ENCODE measurements at regions of chr6 and their contacts with region 1.

Region 1: DNA sequence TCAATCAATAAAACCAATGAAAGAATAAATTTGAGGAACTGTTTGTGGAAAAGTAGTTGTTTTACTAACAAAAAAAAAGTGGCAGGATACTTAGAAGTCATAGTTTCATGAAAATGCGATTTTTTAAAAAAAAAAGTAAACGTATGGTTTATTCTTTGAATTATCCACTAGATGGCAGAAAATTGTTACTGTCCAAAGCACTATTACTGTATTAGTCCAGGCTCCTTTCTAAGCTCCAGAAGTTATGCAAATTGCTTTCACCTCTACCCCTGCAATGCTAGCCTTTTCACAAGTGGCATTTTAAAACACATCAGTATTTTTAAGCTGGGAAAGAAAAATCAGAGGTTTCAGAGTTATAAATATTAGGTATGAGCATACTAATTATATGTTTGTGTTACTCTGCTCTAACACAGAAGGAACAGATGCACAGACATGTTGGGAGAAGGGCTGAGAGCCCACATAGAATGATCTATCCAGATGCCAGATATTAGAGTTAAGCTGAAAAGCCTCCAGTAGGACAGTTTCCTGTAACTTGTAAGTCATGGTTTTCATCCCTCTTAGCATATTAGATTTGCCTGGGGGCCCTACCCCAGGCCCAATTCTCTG is 63.9 kb downstream of the FHL5 start:
- DNase-seq: peak; percentile 36
- CTCF ChIP-seq: peak; percentile 12

Region 2: GRCh38 chr6:96542702-96543101 is 84.2 kb before region 1 on chr6:
- CTCF ChIA-PET with region 1: no interaction called
- POLR2A ChIA-PET with region 1: no interaction called
- DNase-seq: no peak
- CTCF ChIP-seq: peak; percentile 27

Region 3: DNA sequence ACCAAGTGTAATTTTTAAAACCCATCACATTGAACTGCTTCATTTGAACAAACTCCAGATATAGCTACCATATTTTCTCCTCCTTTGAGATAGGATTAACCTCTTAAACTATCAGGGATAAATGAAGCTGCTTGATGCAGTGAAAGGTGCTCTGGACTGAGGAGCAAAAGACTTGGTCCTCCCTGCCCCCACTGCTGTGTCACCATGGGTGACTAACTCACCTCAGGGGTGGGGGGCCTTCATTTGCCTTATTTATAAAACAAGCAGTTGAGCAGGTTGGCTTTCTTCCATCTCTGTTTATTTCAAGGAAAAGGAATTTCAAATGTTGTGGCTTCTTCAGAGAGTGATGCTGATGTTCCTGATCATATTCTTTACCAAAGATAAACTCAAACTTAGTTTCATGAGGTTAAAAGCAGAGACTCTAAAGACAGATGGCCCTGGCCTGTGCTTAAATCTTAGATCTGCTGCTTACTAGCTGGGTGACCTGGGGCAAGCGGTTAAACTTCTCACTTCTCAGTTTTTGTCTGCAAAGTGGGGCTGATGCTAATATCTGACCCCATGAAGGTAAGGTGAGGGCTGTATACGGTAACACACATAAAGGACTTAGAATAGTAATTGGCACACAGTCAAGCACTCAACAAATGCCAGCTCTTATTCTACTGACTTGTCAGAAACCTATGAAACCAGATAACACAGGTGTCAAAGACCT is 13.4 kb before region 1 on chr6:
- CTCF ChIA-PET with region 1: interaction called, 10 read pairs
- POLR2A ChIA-PET with region 1: no interaction called
- DNase-seq: no peak
- CTCF ChIP-seq: no peak

Region 4: DNA sequence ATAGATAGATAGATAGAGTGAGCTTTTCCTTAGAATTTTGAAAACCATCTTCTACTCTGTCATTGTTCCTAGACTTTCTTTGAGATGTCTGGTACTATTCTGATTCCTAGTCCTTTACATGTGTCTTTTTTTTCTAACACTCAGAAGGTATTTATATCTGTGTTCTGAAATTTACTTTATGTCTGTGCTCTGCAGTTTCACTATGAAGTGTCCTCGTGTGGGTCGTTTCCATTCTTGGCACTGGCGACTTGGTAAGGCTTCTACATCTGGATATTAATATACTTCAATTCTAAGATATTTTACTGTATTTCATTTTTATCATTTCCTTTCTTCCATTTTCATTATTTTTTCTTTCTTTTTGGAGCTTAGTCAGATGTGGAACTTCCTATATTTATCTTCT is 23.1 kb after region 1 on chr6:
- CTCF ChIA-PET with region 1: interaction called, 15 read pairs
- POLR2A ChIA-PET with region 1: no interaction called
- DNase-seq: peak; percentile 14
- CTCF ChIP-seq: no peak

Region 5: GRCh38 chr6:96816301-96816817 is 189.5 kb after region 1 on chr6:
- CTCF ChIA-PET with region 1: no interaction called
- POLR2A ChIA-PET with region 1: no interaction called
- DNase-seq: no peak
- CTCF ChIP-seq: no peak

Region 6: DNA sequence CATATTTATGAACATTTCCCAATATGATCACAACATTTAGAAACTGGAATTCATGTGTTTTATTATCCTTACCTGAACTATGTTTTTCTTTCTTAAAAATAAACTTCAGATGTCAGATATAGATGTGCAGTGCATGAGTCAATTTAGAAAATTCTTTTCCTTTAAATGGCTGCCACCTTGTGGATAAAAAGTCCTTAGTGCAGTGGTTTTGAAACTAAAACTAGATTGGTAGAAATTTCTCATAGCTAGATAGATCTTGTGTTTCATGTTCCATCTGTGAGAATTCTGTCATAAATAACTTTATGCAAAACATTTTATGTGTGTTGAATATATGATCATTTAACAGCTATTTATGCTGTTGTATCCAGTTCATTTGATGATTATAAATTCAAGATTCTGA is 432.6 kb after region 1 on chr6:
- CTCF ChIA-PET with region 1: interaction called, 32 read pairs
- POLR2A ChIA-PET with region 1: no interaction called
- DNase-seq: peak; percentile 68
- CTCF ChIP-seq: peak; percentile 44

Region 7: DNA sequence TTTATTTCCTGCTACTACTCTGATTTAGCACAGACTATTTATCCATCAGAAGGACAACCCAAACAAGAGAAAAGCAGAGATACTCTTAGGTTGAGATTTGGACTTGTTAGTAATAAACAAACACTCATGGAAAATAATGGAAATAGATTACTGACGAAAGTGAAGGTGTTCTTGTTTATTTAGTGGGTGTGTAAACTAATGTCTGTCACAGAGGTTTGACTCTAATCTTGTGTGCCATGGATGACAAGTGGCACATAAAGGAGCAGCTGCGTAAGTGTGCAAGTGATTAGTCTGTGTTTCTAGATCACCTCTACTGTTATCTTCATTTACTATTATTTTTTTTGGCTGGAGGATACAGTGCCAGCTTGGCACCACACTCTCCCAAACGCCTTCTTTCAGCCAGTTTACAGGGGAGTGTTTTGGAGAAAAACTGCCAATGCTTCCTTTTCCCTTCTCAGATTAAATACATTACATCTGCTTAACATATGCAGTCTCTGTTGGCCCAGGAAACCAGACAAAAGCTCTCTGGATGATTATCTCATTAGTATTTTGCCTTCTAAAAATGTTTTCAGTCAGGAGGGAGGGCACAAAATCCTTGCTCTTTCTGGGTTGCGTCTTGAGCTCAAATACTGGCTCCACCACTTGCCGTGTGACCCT is 509.6 kb after region 1 on chr6:
- CTCF ChIA-PET with region 1: no interaction called
- POLR2A ChIA-PET with region 1: no interaction called
- DNase-seq: no peak
- CTCF ChIP-seq: no peak